ENCODE measurements at regions of chr9 and their contacts with region 1.

Region 1: GRCh38 chr9:83701769-83702168 is 6.0 kb downstream of the UBQLN1 start:
- DNase-seq: peak; percentile 87
- H3K4me3 ChIP-seq: 0 out of 2 replicates have a peak overlapping the region, but pooled peaks have one; percentile 19
- H3K27me3 ChIP-seq: no peaks in the 10 kb centered on the region
- CTCF ChIP-seq: no peak

Region 2: DNA sequence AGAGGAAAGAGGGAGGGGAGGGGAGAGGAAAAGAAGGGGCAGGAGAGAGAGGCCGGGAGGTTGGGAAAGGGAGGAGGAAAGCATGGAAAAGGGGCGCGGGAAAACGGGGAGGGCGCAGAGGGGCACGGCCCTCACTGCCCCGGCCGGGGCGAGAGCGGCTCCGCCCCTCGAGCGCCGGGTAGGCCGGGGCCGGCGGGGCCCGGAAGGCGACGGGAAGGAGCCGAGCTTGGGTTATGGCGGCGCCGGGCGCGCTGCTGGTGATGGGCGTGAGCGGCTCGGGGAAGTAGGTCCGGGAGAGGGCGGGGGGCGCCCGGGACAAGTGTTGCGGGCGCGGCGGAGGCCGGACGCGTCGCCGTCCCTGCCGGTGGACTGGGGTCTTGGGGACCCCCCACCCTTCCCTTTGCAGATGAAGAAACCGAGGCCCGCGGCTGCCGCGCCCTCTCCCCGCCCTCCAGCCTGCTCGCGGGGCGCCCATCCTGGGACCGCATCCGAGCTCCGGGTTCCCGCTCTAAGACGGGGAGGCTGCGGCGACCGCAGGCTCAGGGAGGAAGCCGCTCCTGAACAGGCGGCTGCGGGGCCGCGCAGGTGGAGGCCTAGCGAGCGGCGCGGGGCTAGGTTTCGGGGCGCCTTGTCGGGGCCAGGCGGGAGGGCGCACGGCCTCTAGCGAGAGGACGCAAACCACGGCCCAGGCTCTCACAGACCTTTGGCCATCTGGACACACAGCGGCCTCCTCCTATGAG is 78.7 kb before region 1 on chr9 and contains the start of gene IDNK:
- CTCF ChIA-PET with region 1: interaction called, 5 read pairs
- POLR2A ChIA-PET with region 1: interaction called, 20 read pairs
- DNase-seq: no peak
- H3K4me3 ChIP-seq: peak within 1 kb of the TSS; percentile 65
- H3K27me3 ChIP-seq: no peaks in the 10 kb centered on the region
- CTCF ChIP-seq: no peak
- polyA plus RNA-seq, gene IDNK: 2.7 and 3.5 TPM in 2 replicates

Region 3: DNA sequence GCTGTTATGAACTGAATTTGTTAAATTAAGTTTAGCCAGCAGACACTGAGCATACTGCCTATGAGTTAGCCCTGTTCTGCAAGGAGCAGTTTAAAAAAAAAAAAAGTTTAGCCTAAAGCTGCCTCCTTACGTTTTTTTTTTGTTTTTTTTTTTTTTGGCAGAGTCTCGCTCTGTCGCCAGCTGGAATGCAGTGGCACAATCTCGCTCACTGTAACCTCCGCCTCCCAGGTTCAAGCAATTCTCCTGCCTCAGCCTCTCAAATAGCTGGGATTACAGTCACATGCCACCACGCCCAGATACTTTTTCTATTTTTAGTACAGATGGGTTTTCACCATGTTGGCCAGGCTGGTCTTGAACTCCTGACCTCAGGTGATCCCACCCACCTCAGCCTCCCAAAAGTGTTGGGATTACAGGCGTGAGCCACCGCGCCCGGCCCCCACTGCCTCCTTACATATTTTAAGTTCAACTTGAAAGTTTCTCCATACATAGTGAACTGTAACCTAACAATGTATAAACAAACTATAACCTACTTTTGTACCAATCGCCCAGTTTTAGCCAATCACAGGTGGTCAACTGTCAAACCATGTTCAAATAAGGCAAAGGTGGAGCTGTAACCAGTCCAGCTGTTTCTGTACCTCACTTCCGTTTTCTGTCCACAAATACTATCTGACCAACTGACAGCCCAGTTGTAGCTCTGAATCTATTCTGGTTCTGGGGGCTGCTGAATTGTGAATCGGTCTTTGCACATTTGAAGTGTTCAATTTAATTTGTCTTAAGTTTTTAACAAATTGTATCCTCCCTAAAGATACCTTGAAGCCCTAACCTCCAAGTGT is 98.6 kb after region 1 on chr9:
- CTCF ChIA-PET with region 1: no interaction called
- POLR2A ChIA-PET with region 1: no interaction called
- DNase-seq: no peak
- H3K4me3 ChIP-seq: no peak overlapping the region
- H3K27me3 ChIP-seq: no peaks in the 10 kb centered on the region
- CTCF ChIP-seq: no peak

Measured in BJ (cell line).